ENCODE measurements at regions of chr12 and their contacts with region 1.

Region 1: GRCh38 chr12:74539765-74540526 is 2.3 kb downstream of the ATXN7L3B start:
- DNase-seq: no peak

Region 2: DNA sequence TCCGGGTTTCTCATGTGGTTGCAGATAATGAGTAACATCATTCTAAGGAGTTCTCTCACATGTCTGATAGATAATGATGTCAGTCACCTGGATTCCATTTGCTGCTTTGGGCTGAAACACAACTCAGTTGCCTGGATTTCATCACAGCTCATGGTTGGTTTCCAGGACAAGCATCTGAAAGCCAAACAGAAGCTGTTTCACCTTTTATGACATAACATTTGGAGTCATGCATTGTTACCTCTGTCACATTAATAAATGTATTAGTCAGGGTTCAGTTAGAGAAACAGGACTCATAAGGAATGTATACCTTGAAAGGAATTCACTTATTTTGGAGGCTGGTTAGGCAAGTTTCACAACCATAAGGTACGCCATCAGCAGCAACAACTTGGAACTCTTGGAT is 254.2 kb before region 1 on chr12:
- intact Hi-C with region 1: no loop called
- DNase-seq: no peak

Region 3: GRCh38 chr12:74646831-74647230 is 106.9 kb after region 1 on chr12:
- intact Hi-C with region 1: loop called (anchors 10 kb)
- DNase-seq: peak in 18 of 42 donors; percentile 5 to 71 (median 32)

Region 4: DNA sequence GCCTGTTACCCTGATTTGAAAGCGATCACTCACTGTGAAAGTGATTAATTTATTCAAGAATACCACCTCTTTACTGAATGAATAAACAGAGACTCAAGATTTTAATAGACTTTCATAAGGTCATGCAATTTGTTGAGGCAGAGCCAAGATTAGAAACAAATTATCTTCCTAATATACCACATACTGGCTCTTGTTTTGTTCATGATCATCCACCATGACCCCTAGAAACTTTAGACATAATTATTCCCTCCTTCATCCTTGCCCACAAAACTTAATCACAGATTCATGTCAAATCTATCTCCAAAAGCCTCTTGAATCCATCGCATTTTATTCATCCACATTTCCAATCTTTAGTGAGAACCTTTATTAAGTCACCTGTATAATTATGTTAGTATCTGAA is 150.0 kb after region 1 on chr12:
- intact Hi-C with region 1: no loop called
- DNase-seq: no peak

Measured in head of caudate nucleus (tissue), 42 donors.